Pancreas (tissue), 10 donors: ENCODE measurements at regions of chr10 and their contacts with region 1.

Region 1: DNA sequence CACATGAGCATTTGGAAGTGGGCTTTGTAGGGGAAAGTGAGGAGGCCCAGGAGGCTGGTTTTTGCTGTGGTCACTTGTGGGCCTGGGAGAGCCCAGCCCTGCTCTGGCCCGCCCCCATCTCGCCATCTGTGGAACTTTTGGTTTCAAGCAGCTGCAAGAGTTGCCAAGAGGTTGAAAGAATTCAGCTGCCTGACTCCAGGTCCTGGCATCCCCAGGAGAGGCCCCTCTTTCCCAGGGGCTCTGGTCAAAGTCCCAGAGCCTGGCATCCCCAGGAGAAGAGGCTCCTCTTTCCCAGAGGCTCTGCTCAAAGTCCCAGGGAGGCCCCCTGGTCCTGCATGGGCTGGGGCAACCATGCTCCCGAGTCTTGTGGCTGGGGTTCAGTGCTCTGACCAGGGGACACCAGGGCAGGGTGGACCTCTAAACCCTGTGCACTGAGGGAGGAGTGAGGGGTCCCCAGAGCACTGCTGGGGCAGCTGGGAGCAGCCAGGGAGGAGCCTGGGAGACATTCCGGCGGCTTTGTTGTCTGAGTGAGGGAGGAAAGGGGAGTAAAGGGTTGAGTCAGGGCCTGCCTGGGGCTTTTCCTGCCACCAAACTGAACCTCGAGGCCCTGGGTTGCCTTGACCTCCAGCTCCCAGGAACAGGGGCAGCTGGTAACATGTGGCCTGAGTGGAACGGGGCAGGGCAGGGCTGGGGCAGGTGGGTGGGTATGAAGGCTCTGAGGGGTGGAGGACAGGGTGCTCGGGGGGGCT is 27.7 kb upstream of the CSGALNACT2 start:
- DNase-seq: peak in 3 of 6 donors; percentile 19 to 62 (median 48)
- ATAC-seq: peak in 1 of 4 donors; percentile 46
- H3K4me3 ChIP-seq: no peak overlapping the region
- H3K27ac ChIP-seq: no peak overlapping the region
- H3K4me1 ChIP-seq: peaks cover 0 to 2% (median 0%) of the 10 kb centered on the region in 3 donors
- H3K27me3 ChIP-seq: no peaks in the 10 kb centered on the region
- CTCF ChIP-seq: no peak

Region 2: GRCh38 chr10:42875792-42876460 is 234.6 kb before region 1 on chr10:
- intact Hi-C with region 1: loop called in 1 of 3 experiments (anchors 10 kb)
- DNase-seq: no peak
- ATAC-seq: no peak
- H3K4me3 ChIP-seq: no peak overlapping the region
- H3K27ac ChIP-seq: no peak overlapping the region
- H3K4me1 ChIP-seq: no peaks in the 10 kb centered on the region
- H3K27me3 ChIP-seq: no peaks in the 10 kb centered on the region
- CTCF ChIP-seq: no peak

Region 3: GRCh38 chr10:43237631-43238446 is 127.3 kb after region 1 on chr10:
- intact Hi-C with region 1: no loop called
- DNase-seq: peak in 4 of 6 donors; percentile 3 to 34 (median 16)
- ATAC-seq: no peak
- H3K4me3 ChIP-seq: no peak overlapping the region
- H3K27ac ChIP-seq: no peak overlapping the region
- H3K4me1 ChIP-seq: no peaks in the 10 kb centered on the region
- H3K27me3 ChIP-seq: no peaks in the 10 kb centered on the region
- CTCF ChIP-seq: no peak